ENCODE measurements at regions of chr2 and their contacts with region 1.

Region 1: DNA sequence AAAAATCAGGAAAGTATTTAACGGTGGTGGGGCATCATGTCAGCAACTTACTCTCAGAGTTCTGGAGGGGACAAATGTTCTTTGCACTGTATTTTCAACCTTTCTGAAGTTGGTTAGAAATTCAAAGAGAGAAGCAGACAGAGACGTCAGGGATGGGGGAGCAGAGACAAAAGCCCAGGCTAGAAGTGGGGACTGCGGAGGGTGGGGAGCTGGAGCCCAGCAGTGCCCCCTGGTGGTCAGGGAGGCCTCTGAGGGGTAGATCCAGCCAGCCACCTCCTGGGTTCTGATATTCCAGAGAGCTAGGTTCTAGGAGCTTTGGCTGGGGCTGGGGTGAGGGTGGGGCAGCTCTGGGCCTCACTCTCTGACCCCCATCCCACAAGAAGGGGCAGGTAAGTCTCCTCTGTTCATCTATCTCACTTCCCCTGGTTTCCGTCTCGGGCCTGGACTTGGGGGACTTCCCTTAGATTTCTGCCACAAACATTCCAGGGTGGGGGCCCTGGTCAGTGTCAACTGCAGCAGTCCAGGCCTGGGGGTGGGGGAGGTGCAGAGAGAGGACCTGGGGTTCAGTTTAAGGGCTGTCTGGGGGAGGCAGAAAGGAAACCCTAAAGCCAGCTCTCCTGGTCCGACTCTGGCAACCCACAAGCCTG is 8.9 kb downstream of the TNS1 start:
- DNase-seq: peak; percentile 85
- ATAC-seq: peak; percentile 91
- H3K4me3 Mint-ChIP-seq: no peak overlapping the region
- H3K27ac Mint-ChIP-seq: no peak overlapping the region
- H3K4me1 Mint-ChIP-seq: peaks cover 16% of the 10 kb centered on the region
- H3K27me3 Mint-ChIP-seq: peaks cover 4% of the 10 kb centered on the region; the same call in 1 of the 2 replicates
- CTCF ChIP-seq: peak; percentile 90

Region 2: DNA sequence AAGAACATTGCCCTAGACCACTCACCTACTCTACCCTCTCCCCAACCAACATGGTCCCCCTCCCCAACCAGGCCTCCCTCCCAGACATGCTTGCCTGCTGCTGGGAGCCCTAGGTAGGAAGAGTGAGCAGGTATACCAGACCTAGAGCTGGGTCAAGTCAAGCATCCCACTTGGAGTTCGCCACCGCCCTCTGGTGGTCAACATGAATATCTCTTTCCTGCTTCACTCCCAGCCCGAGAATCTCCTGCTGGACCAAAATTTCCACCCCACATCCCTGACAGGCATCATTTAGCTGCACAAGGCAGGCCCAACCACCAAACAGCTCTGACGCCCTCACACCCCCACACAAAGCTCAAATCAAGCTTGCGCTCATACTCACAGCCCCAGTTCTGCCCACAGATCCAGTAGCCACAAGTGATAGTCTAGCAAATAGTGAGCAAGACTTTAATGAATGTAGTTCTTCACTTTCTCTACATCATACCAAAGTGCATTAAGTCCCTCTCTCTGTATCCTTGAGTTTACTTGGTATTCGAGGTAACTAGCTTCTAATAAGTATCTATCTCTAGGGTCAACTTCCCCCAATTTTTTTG is 107.1 kb before region 1 on chr2:
- CTCF ChIA-PET with region 1: interaction called, 32 read pairs
- POLR2A ChIA-PET with region 1: no interaction called
- DNase-seq: peak; percentile 86
- ATAC-seq: peak; percentile 92
- H3K4me3 Mint-ChIP-seq: no peak overlapping the region
- H3K27ac Mint-ChIP-seq: no peak overlapping the region
- H3K4me1 Mint-ChIP-seq: no peaks in the 10 kb centered on the region
- H3K27me3 Mint-ChIP-seq: no peaks in the 10 kb centered on the region
- CTCF ChIP-seq: peak; percentile 86

Region 3: DNA sequence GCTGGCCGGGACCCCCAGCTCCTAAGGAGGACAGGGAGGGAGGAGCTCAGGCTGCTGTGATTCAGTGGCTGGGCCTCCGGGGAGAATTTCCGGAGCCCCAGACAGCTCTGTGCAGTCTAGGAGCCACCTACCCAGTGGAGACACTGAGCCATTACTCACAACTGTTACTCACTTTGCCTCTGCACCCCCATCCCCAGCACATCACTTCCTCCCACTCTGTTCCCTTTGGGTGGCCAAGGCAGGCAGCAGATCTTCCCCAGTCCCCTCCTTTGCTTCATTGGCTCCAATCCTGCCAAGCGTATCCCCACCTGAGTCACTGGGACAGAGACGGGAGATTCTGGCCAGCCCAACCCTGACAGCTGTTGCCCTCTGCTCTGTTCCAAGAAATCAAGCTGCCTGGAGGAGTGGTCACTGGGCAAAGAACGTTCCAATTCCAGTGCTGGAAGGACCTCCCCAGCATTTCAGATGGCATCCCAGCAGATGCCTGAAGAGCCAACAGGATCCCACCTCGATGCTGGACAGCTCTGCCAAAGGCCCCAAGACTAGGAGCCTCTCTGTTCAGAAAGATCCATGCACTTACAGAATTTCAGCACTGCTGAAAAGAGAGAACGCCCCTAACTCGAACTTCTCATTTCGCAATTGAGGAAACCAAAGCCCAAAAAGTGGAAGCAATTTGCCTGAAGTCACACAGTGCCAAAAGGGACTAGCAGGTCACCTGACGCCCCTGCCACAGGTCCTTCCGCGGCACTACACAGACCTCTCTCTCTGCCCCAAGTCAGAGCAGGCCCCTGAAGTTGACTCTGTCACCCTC is 59.4 kb before region 1 on chr2:
- CTCF ChIA-PET with region 1: interaction called, 17 read pairs
- POLR2A ChIA-PET with region 1: no interaction called
- DNase-seq: no peak
- ATAC-seq: no peak
- H3K4me3 Mint-ChIP-seq: no peak overlapping the region
- H3K27ac Mint-ChIP-seq: 0 out of 2 replicates have a peak overlapping the region, but pooled peaks have one; percentile 41
- H3K4me1 Mint-ChIP-seq: peaks cover 65% of the 10 kb centered on the region
- H3K27me3 Mint-ChIP-seq: no peaks in the 10 kb centered on the region; the same call in 1 of the 2 replicates
- CTCF ChIP-seq: no peak

Region 4: GRCh38 chr2:217964275-217965161 is 29.4 kb before region 1 on chr2:
- CTCF ChIA-PET with region 1: interaction called, 18 read pairs
- POLR2A ChIA-PET with region 1: no interaction called
- DNase-seq: no peak
- ATAC-seq: peak; percentile 79
- H3K4me3 Mint-ChIP-seq: no peak overlapping the region
- H3K27ac Mint-ChIP-seq: no peak overlapping the region
- H3K4me1 Mint-ChIP-seq: peaks cover 21% of the 10 kb centered on the region
- H3K27me3 Mint-ChIP-seq: no peaks in the 10 kb centered on the region; the same call in 1 of the 2 replicates
- CTCF ChIP-seq: no peak

Region 5: DNA sequence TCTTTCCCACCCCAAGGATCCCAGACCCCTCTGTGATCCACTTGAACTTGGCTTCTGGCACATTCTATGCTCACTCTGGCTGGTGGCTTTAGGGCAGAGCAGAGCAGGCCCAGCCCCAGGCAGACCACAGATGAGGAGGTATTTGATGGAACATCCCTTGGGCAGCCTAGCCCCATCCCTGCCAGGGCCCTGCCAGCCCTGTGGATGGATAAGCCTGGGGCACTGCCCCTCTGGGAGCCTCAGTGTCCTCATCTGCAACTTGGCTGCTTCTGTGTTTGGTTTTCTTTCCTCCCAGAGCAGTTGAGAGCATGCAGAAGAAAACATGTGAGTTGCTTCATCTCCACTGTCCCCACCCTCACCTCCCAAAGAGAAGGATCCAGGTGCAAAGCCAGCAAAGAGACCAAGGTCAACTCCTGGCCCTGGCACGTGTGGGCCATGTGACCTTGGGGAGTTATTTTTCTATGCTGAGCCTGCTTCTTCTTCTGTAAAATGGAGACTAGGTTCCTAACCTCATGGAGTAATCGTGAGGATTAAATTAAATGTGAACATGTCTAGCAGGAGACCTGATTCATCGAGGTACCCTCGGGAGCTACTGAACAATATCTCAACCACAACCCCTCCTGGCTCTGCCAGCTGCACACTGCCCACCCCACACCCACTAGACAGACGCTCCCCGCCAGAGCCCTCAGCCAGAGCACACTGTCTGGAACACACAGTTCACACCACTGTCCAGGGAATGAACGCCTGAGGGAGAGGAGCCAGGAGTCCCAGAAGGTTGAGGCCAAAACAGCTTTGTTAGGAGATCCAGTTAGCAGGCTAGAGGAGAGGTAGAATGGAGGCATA is 23.5 kb after region 1 on chr2:
- CTCF ChIA-PET with region 1: interaction called, 31 read pairs
- POLR2A ChIA-PET with region 1: no interaction called
- DNase-seq: no peak
- ATAC-seq: no peak
- H3K4me3 Mint-ChIP-seq: no peak overlapping the region
- H3K27ac Mint-ChIP-seq: no peak overlapping the region
- H3K4me1 Mint-ChIP-seq: peaks cover 31% of the 10 kb centered on the region
- H3K27me3 Mint-ChIP-seq: peaks cover 5% of the 10 kb centered on the region; the same call in 1 of the 2 replicates
- CTCF ChIP-seq: no peak

Region 6: GRCh38 chr2:218074031-218074430 is 80.1 kb after region 1 on chr2:
- CTCF ChIA-PET with region 1: interaction called, 16 read pairs
- POLR2A ChIA-PET with region 1: no interaction called
- DNase-seq: peak; percentile 77
- ATAC-seq: peak; percentile 85
- H3K4me3 Mint-ChIP-seq: no peak overlapping the region
- H3K27ac Mint-ChIP-seq: no peak overlapping the region
- H3K4me1 Mint-ChIP-seq: peaks cover 14% of the 10 kb centered on the region
- H3K27me3 Mint-ChIP-seq: no peaks in the 10 kb centered on the region; the same call in 1 of the 2 replicates
- CTCF ChIP-seq: peak; percentile 32; the same call in 1 of the 2 replicates